HCT116 (cell line): ENCODE measurements at regions of chr10 and their contacts with region 1.

Region 1: GRCh38 chr10:93680412-93681047 is 21.9 kb downstream of the FRA10AC1 start:
- DNase-seq: peak; percentile 34
- ATAC-seq: peak; percentile 74
- H3K4me3 ChIP-seq: no peak overlapping the region
- H3K27ac ChIP-seq: no peak overlapping the region
- H3K4me1 ChIP-seq: no peaks in the 10 kb centered on the region
- H3K27me3 ChIP-seq: no peaks in the 10 kb centered on the region
- CTCF ChIP-seq: peak; percentile 32 to 65 (median 60); a peak in 5 of 6 replicates
- POLR2A ChIP-seq: no peak
- RAD21 ChIP-seq: peak; percentile 76

Region 2: GRCh38 chr10:93376372-93377293 is 303.9 kb before region 1 on chr10:
- CTCF ChIA-PET with region 1: interaction called, 4 read pairs
- POLR2A ChIA-PET with region 1: no interaction called
- RAD21 ChIA-PET with region 1: no interaction called
- intact Hi-C with region 1: loop called (anchors 10 kb)
- DNase-seq: peak; percentile 80
- ATAC-seq: peak; percentile 83
- H3K4me3 ChIP-seq: no peak overlapping the region
- H3K27ac ChIP-seq: peak overlapping the region; percentile 80
- H3K4me1 ChIP-seq: peaks cover 29 to 49% of the 10 kb centered on the region in 2 experiments
- H3K27me3 ChIP-seq: no peaks in the 10 kb centered on the region
- CTCF ChIP-seq: peak; percentile 84 to 91 (median 90); a peak in 5 of 6 replicates
- POLR2A ChIP-seq: no peak
- RAD21 ChIP-seq: peak; percentile 98

Region 3: DNA sequence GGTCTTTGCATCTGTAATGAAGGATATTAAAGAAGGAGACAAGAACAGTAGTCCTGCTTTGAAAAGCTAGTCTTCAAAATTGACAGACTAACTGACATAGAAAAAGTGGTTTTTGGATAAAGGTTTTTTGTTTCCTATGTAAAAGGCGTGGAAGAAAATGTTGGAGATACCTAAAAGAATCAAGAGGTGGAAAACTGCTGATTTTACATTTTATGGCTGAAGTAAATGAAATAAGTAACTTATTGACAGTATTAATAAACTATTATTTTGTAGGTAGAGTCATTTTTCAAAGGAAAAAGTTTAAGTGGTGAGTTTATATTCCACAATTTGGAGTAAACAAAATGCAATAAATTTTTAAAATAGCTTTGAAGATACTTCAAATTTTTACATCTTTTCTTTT is 852.5 kb after region 1 on chr10:
- CTCF ChIA-PET with region 1: no interaction called
- POLR2A ChIA-PET with region 1: no interaction called
- RAD21 ChIA-PET with region 1: no interaction called
- intact Hi-C with region 1: no loop called
- DNase-seq: no peak
- ATAC-seq: no peak
- H3K4me3 ChIP-seq: no peak overlapping the region
- H3K27ac ChIP-seq: no peak overlapping the region
- H3K4me1 ChIP-seq: no peaks in the 10 kb centered on the region
- H3K27me3 ChIP-seq: no peaks in the 10 kb centered on the region
- CTCF ChIP-seq: no peak
- POLR2A ChIP-seq: no peak
- RAD21 ChIP-seq: no peak